Adrenal gland (tissue), 19 donors: ENCODE measurements at regions of chr19 and their contacts with region 1.

Region 1: DNA sequence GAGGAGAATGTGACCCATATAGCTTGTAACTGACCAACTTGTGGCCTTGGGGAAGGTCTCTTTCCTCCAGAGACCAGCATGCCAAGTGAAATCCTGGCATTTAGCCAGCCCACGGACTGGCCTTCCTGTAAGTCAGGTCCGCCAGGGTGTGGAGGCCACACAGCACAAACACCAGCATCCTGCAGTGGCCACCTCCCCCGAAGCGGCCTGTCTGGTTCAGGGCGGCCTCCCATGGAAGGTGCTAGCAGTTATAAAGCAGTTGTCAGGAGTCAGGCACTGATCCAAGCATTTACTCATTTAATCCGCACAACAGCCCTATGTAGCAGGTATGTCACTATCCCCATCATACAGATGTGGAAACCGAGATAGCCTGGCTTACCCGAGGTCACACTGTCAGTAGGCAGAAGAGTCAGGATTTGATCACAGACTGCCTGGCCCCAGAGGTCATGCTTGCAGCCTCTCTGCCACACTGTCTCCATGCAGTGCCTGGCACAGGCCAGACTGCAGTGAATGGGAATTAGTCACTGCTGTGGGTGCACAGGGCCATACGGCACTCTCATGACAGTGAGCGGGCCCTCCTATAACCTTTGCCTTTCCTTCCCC is 36.7 kb downstream of the CAPN12 start:
- DNase-seq: peak; percentile 67 to 90 (median 84)
- H3K4me3 ChIP-seq: no peak overlapping the region
- H3K27ac ChIP-seq: peak overlapping the region; percentile 26 to 93 (median 82)
- H3K4me1 ChIP-seq: peaks cover 44 to 78% of the 10 kb centered on the region in 2 donors
- H3K27me3 ChIP-seq: no peaks in the 10 kb centered on the region
- CTCF ChIP-seq: no peak
- POLR2A ChIP-seq: peak in 1 of 2 donors; percentile 20

Region 2: GRCh38 chr19:38658462-38659306 is 48.9 kb before region 1 on chr19:
- intact Hi-C with region 1: loop called (anchors 5 to 10 kb)
- DNase-seq: peak; percentile 70 to 91 (median 85)
- H3K4me3 ChIP-seq: peak overlapping the region in 1 of 4 donors; percentile 7
- H3K27ac ChIP-seq: peak overlapping the region; percentile 66 to 99 (median 95)
- H3K4me1 ChIP-seq: peaks cover 90 to 100% of the 10 kb centered on the region in 2 donors
- H3K27me3 ChIP-seq: no peaks in the 10 kb centered on the region
- CTCF ChIP-seq: no peak
- POLR2A ChIP-seq: peak in 1 of 2 donors; percentile 82